ENCODE measurements at regions of chr2 and their contacts with region 1.

Region 1: GRCh38 chr2:177325270-177325929 is 60.9 kb upstream of the NFE2L2 start:
- DNase-seq: no peak
- ATAC-seq: peak; percentile 69
- H3K4me3 ChIP-seq: no peak overlapping the region
- H3K27ac ChIP-seq: no peak overlapping the region
- H3K4me1 ChIP-seq: no peaks in the 10 kb centered on the region
- H3K27me3 ChIP-seq: no peaks in the 10 kb centered on the region
- CTCF ChIP-seq: no peak
- EP300 ChIP-seq: no peak
- POLR2A ChIP-seq: no peak
- RAD21 ChIP-seq: no peak

Region 2: GRCh38 chr2:176892676-176893226 is 432.6 kb before region 1 on chr2:
- CTCF ChIA-PET with region 1: no interaction called
- POLR2A ChIA-PET with region 1: interaction called, 10 read pairs
- RAD21 ChIA-PET with region 1: no interaction called
- SMC1A ChIA-PET with region 1: no interaction called
- in situ Hi-C with region 1: no loop called
- intact Hi-C with region 1: no loop called
- DNase-seq: no peak
- ATAC-seq: no peak; the same call in 2 of the 3 replicates
- H3K4me3 ChIP-seq: no peak overlapping the region
- H3K27ac ChIP-seq: no peak overlapping the region
- H3K4me1 ChIP-seq: no peaks in the 10 kb centered on the region
- H3K27me3 ChIP-seq: no peaks in the 10 kb centered on the region
- CTCF ChIP-seq: no peak
- EP300 ChIP-seq: no peak
- POLR2A ChIP-seq: no peak
- RAD21 ChIP-seq: no peak

Region 3: DNA sequence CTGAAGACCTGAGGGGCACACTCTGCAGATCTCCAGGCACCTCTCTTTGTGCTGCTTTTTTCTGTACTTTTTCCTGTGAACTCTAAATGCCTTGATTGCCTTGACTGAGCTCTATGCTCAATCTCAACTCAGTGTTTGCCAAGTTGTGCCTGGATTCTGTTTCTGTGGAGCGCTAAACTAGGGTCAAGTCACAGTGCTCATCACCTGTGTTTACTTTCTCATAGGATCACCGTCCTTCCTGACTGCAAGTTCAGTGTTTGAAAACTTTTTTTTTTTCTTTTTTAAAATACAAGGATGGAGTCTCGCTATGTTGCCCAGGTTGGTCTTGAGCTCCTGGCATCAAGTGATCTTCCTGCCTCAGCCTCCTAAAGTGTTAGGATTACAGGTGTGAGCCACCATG is 129.8 kb after region 1 on chr2:
- CTCF ChIA-PET with region 1: no interaction called
- POLR2A ChIA-PET with region 1: no interaction called
- RAD21 ChIA-PET with region 1: no interaction called
- SMC1A ChIA-PET with region 1: no interaction called
- in situ Hi-C with region 1: no loop called
- intact Hi-C with region 1: no loop called
- DNase-seq: no peak
- ATAC-seq: no peak
- H3K4me3 ChIP-seq: no peak overlapping the region
- H3K27ac ChIP-seq: no peak overlapping the region
- H3K4me1 ChIP-seq: no peaks in the 10 kb centered on the region
- H3K27me3 ChIP-seq: no peaks in the 10 kb centered on the region
- CTCF ChIP-seq: no peak
- EP300 ChIP-seq: no peak
- POLR2A ChIP-seq: no peak
- RAD21 ChIP-seq: no peak